Motor neuron (in vitro differentiated cells): ENCODE measurements at regions of chr6 and their contacts with region 1.

Region 1: GRCh38 chr6:80932359-80932758 is 820.1 kb downstream of the TENT5A start:
- ATAC-seq: peak in 1 of 8 experiments; percentile 64
- H3K4me3 ChIP-seq: no peak overlapping the region
- H3K27ac ChIP-seq: no peak overlapping the region
- H3K4me1 ChIP-seq: no peaks in the 10 kb centered on the region

Region 2: DNA sequence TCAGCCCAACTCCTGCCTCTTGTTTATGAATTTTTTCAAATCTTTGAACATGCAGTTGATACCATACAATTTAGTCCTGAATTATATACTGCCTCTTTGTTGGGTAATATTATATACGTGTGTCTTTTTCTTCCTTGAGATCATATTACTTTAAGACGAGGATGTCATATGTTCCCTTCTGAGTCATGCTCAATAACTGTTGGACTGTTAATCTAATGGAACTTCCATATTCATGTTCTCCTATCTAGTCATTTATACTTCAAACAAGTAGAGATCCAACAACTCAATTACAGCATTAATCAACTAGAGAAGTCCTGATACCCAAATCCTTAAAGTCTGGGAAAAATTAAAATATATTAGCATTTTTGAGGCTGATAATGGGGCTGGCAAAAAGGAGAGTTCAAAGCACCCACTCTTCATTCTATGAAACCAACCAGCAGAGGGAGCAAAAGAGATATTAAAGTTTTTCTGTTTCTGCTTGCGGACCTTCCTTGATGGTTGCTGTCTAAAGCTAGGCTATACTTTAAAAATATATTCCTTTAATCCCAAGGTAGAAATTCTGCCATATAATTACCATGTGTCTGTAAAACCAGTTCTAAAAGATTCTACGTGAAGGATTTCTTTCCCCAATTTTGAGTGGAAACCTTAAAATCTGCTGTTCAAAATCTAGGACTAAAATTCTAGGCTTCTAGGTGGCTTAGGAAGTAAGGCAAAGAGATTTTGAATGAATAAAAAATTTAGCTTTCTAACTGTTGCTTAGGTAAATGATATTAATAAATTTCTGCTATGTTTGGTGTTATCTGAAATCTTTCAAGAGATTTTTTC is 327.0 kb before region 1 on chr6:
- in situ Hi-C with region 1: loop called in 1 of 9 experiments (anchors 25 kb)
- ATAC-seq: peak in 7 of 8 experiments; percentile 48 to 75 (median 65)
- H3K4me3 ChIP-seq: no peak overlapping the region
- H3K27ac ChIP-seq: no peak overlapping the region
- H3K4me1 ChIP-seq: no peaks in the 10 kb centered on the region

Region 3: GRCh38 chr6:80676386-80676785 is 256.0 kb before region 1 on chr6:
- in situ Hi-C with region 1: no loop called
- ATAC-seq: no peak
- H3K4me3 ChIP-seq: no peak overlapping the region
- H3K27ac ChIP-seq: no peak overlapping the region
- H3K4me1 ChIP-seq: no peaks in the 10 kb centered on the region